Psoas muscle (tissue), 8 donors: ENCODE measurements at regions of chr18 and their contacts with region 1.

Region 1: DNA sequence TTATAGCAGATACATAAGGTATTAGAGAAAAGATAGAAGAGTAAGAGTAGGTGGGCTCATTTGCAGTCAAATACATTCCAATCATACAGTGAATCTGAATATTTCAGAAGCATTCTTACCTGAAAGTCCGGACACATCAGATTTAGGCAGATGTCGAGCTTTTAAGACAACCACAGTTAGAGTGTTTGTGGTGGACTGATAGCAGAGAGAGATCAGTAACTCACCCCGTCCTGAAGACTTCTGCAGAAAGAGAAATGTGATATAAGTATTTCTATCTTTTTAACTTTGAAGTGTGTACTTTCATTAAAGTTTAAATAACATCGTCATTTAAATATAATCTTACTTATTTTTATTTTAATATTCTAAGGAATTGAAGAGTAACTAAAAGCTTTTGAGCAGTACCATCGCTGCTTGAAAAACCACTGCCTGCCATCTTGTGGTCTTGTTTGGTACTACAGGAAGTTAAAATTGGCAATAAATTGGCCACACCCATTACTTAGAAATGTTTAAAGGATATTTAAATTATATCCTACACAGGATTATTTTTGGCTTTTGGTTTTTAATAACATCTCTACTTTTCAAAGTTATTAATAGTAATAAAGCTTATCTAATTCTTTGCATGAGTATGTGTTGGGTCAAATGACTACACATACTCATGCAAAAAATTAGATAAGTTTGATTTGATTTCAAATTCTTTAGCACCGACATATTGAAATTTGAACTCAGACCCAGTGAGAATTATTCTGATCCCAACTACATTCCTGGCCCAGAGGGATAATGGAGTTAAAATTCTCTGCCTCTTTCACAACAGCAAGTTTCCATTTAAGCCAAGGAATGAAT is 5.5 kb downstream of the SYT4 start:
- DNase-seq: no peak
- ATAC-seq: no peak
- H3K4me3 ChIP-seq: no peak overlapping the region
- H3K27ac ChIP-seq: no peak overlapping the region
- H3K4me1 ChIP-seq: no peaks in the 10 kb centered on the region
- H3K27me3 ChIP-seq: no peaks in the 10 kb centered on the region
- CTCF ChIP-seq: peak; percentile 69

Region 2: GRCh38 chr18:42114310-42114943 is 1157.4 kb before region 1 on chr18:
- intact Hi-C with region 1: loop called (anchors 5 to 10 kb)
- DNase-seq: peak in 1 of 2 donors; percentile 48
- ATAC-seq: peak; percentile 40 to 89 (median 74)
- H3K4me3 ChIP-seq: no peak overlapping the region
- H3K27ac ChIP-seq: no peak overlapping the region
- H3K4me1 ChIP-seq: no peaks in the 10 kb centered on the region
- H3K27me3 ChIP-seq: no peaks in the 10 kb centered on the region
- CTCF ChIP-seq: peak; percentile 85

Region 3: GRCh38 chr18:42586601-42587000 is 685.2 kb before region 1 on chr18:
- intact Hi-C with region 1: loop called in 1 of 2 experiments (anchors 10 kb)
- DNase-seq: no peak
- ATAC-seq: no peak
- H3K4me3 ChIP-seq: no peak overlapping the region
- H3K27ac ChIP-seq: no peak overlapping the region
- H3K4me1 ChIP-seq: no peaks in the 10 kb centered on the region
- H3K27me3 ChIP-seq: no peaks in the 10 kb centered on the region
- CTCF ChIP-seq: no peak

Region 4: DNA sequence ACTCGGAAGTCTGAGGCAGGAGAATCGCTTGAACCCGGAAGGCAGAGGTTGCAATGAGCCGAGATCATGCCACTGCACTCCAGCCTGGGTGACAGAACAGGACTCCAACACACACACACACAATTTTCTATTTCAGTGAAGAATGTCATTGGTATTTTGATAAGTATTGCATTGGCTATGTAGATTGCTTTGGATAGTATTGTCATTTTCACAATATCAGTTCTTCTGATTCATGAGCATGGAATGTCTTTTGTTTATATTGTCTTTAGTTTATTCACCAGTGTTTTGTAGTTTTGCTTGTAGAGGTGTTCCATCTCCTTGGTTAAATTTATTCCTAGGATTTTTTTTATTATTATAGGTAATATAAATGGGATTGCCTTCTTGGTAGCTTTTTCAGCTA is 698.8 kb after region 1 on chr18:
- intact Hi-C with region 1: no loop called
- DNase-seq: no peak
- ATAC-seq: no peak
- H3K4me3 ChIP-seq: no peak overlapping the region
- H3K27ac ChIP-seq: no peak overlapping the region
- H3K4me1 ChIP-seq: no peaks in the 10 kb centered on the region
- H3K27me3 ChIP-seq: no peaks in the 10 kb centered on the region
- CTCF ChIP-seq: no peak